ENCODE measurements at regions of chr16 and their contacts with region 1.

Region 1: GRCh38 chr16:234468-235305 is at the start of gene FAM234A:
- DNase-seq: peak; percentile 92 to 97 (median 95)
- H3K4me3 ChIP-seq: peak within 1 kb of the TSS; percentile 74
- H3K4me3 Mint-ChIP-seq: peak within 1 kb of the TSS; percentile 93 to 98 (median 96)
- H3K27ac ChIP-seq: peak within 1 kb of the TSS; percentile 94
- H3K27ac Mint-ChIP-seq: peak within 1 kb of the TSS; percentile 99 to 100 (median 99)
- H3K4me1 ChIP-seq: peaks cover 5% of the 10 kb centered on the region
- H3K4me1 Mint-ChIP-seq: peaks cover 14 to 24% (median 18%) of the 10 kb centered on the region in 3 donors
- H3K27me3 ChIP-seq: no peaks in the 10 kb centered on the region
- H3K27me3 Mint-ChIP-seq: no peaks in the 10 kb centered on the region
- total RNA-seq, gene FAM234A: 23.1 to 26.1 TPM

Region 2: DNA sequence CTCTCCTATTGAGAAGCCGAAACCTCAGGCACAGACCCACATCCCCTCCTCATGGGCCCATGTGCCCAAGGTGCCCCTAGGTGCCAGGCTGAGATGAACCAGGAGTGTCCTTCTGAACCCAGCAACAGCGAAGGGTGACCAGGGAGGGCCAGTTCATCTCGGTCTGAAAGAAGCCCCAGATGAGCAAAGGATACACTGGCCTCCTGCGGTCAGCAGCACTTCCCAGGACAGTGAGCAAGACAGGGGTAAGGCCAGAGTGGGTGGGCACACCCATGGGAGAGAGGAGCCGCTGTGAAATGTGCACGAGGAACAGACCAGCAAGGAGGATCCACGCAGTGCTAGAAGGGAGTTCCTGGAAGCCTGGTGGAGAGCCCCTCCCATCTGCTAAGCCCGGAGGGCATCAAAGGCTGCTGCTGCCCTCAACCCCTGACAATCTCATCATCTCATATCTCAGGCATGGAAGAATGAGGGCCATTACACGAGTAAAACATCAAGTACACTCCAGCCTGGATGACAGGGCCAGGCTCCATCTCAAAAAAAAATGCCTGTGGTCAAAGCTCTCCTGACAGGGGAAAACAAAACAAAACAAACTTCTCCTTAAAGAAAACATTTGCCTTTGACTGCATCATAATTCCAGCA is 85.5 kb before region 1 on chr16:
- CTCF ChIA-PET with region 1: no interaction called
- POLR2A ChIA-PET with region 1: no interaction called
- DNase-seq: no peak
- H3K4me3 ChIP-seq: no peak overlapping the region
- H3K4me3 Mint-ChIP-seq: no peak overlapping the region
- H3K27ac ChIP-seq: no peak overlapping the region
- H3K27ac Mint-ChIP-seq: peak overlapping the region in 1 of 8 donors; percentile 68
- H3K4me1 ChIP-seq: no peaks in the 10 kb centered on the region
- H3K4me1 Mint-ChIP-seq: peaks cover 0 to under 1% (median 0%) of the 10 kb centered on the region in 3 donors
- H3K27me3 ChIP-seq: no peaks in the 10 kb centered on the region
- H3K27me3 Mint-ChIP-seq: peaks cover 14 to 27% of the 10 kb centered on the region in 2 donors

Region 3: DNA sequence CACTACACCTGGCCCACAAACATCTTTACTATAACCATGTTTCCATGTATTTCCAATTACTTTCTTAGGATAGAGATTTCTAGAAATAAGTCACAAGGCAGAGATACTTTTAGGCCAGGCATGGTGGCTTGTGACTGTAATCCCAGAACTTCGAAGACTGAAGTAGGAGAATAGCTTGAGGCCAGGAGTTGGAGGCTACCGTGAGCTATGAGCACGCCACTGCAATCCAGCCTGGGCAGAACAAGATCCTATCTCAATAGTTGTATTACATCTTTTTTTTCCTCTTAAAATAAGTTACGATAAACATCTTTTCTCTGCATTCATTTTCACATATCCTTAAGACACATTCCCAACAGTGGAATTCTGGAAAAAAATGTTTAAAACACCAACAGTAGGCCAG is 19.9 kb before region 1 on chr16:
- CTCF ChIA-PET with region 1: no interaction called
- POLR2A ChIA-PET with region 1: no interaction called
- DNase-seq: no peak
- H3K4me3 ChIP-seq: no peak overlapping the region
- H3K4me3 Mint-ChIP-seq: no peak overlapping the region
- H3K27ac ChIP-seq: no peak overlapping the region
- H3K27ac Mint-ChIP-seq: peak overlapping the region in 1 of 8 donors; percentile 47
- H3K4me1 ChIP-seq: no peaks in the 10 kb centered on the region
- H3K4me1 Mint-ChIP-seq: peaks cover under 1 to 20% (median 7%) of the 10 kb centered on the region in 3 donors
- H3K27me3 ChIP-seq: no peaks in the 10 kb centered on the region
- H3K27me3 Mint-ChIP-seq: no peaks in the 10 kb centered on the region

Region 4: DNA sequence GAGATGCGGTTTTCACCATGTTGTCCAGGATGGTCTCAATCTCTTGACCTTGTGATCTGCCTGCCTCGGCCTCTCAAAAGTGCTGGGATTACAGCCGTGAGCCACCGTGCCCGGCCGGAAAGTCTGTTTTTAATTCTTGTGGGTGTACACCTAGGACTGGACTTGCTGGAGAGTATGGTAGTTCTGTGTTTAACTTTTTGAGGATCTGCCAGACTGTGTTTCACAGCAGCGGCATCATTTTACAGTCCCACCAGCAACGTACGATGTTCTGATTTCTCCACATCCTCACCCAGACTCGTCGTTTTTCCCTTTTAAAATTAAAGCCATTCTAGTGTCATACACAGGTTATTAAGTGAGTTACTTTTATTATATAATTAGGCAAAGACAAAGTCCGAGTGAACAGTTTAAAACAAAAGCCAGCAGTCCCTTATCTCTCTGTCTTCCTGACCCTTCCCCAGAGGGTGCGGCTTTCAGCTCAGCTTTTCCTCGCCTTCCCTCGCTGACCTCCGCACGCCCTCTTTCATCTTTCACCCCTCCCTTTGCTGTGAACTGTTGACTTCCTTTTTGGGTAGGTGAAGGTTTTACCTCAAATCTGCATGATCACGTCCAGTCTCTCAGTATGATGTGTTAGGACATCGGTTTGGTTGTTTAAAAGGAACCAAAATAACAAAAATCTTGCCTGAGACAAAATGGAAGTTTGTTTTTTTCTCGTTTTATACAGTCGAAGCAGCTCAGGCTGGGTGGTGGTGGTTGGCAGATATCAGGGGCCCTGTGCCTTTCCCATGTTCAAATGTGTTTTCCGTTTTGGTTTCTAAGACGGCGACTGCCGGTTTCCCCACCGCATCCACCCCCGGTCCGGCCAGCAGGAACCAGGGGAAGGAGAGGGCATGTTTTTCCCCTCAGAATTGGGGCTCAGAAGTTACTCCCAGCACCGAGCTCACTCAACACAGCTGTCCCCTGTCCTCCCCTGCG is 18.0 kb after region 1 on chr16:
- CTCF ChIA-PET with region 1: interaction called, 13 read pairs
- POLR2A ChIA-PET with region 1: interaction called, 5 read pairs
- DNase-seq: peak in 2 of 5 donors; percentile 21 to 38
- H3K4me3 ChIP-seq: peak overlapping the region; percentile 40
- H3K4me3 Mint-ChIP-seq: peak overlapping the region; percentile 67 to 92 (median 81)
- H3K27ac ChIP-seq: peak overlapping the region; percentile 59
- H3K27ac Mint-ChIP-seq: peak overlapping the region; percentile 34 to 98 (median 92)
- H3K4me1 ChIP-seq: peaks cover 20% of the 10 kb centered on the region
- H3K4me1 Mint-ChIP-seq: peaks cover 16 to 18% (median 18%) of the 10 kb centered on the region in 3 donors
- H3K27me3 ChIP-seq: no peaks in the 10 kb centered on the region
- H3K27me3 Mint-ChIP-seq: no peaks in the 10 kb centered on the region

Region 5: GRCh38 chr16:352547-353403 is 118.1 kb after region 1 on chr16 and contains the start of gene AXIN1:
- CTCF ChIA-PET with region 1: interaction called, 4 read pairs
- POLR2A ChIA-PET with region 1: interaction called, 13 read pairs
- DNase-seq: peak; percentile 98 to 100 (median 100)
- H3K4me3 ChIP-seq: peak within 1 kb of the TSS; percentile 59
- H3K4me3 Mint-ChIP-seq: peak within 1 kb of the TSS; percentile 87 to 98 (median 90)
- H3K27ac ChIP-seq: peak within 1 kb of the TSS; percentile 57
- H3K27ac Mint-ChIP-seq: peak within 1 kb of the TSS; percentile 80 to 94 (median 93)
- H3K4me1 ChIP-seq: peaks cover 69% of the 10 kb centered on the region
- H3K4me1 Mint-ChIP-seq: peaks cover 43 to 68% (median 57%) of the 10 kb centered on the region in 3 donors
- H3K27me3 ChIP-seq: no peaks in the 10 kb centered on the region
- H3K27me3 Mint-ChIP-seq: no peaks in the 10 kb centered on the region
- total RNA-seq, gene AXIN1: 24.7 to 26.3 TPM